Heart right ventricle (tissue), 16 donors: ENCODE measurements at regions of chr1 and their contacts with region 1.

Region 1: GRCh38 chr1:225627304-225627947 is 25.5 kb downstream of the ENAH start:
- DNase-seq: no peak
- ATAC-seq: peak in 7 of 8 donors; percentile 38 to 82 (median 67)
- H3K4me3 ChIP-seq: no peak overlapping the region
- H3K27ac ChIP-seq: peak overlapping the region in 5 of 10 donors; percentile 35 to 48 (median 42)
- H3K4me1 ChIP-seq: peaks cover 0 to 73% (median 48%) of the 10 kb centered on the region in 9 donors
- H3K27me3 ChIP-seq: no peaks in the 10 kb centered on the region
- CTCF ChIP-seq: no peak

Region 2: DNA sequence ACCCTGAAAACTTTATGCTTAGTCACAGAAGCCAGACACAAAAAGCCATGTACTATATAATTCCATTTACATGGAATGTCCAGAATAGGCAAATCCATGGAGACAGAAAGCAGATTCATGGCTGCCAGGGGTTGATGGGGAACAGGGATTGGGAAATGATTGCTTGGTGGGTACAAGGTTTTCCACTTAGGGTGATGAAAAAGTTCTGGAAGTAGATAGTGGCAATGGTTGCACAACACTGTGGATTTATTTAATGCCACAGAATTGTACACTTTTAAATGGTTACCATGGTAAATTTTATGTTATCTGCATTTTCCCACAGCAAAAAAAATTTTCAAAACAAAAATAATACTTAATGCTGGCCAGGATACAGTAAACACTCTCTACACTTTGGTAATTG is 15.1 kb before region 1 on chr1:
- intact Hi-C with region 1: loop called in 1 of 10 experiments (anchors 2 kb)
- DNase-seq: no peak
- ATAC-seq: peak in 1 of 8 donors; percentile 25
- H3K4me3 ChIP-seq: no peak overlapping the region
- H3K27ac ChIP-seq: peak overlapping the region in 2 of 10 donors; percentile 22 to 57
- H3K4me1 ChIP-seq: peaks cover 3 to 53% (median 23%) of the 10 kb centered on the region in 9 donors
- H3K27me3 ChIP-seq: no peaks in the 10 kb centered on the region
- CTCF ChIP-seq: no peak